PC-3 (cell line): ENCODE measurements at regions of chr7 and their contacts with region 1.

Region 1: GRCh38 chr7:38748056-38748611 is 117.0 kb upstream of the AMPH start:
- DNase-seq: peak; percentile 54
- ATAC-seq: peak; percentile 73
- H3K4me3 ChIP-seq: no peak overlapping the region
- H3K27ac ChIP-seq: no peak overlapping the region
- H3K4me1 ChIP-seq: peaks cover 12% of the 10 kb centered on the region
- H3K27me3 ChIP-seq: no peaks in the 10 kb centered on the region
- CTCF ChIP-seq: peak; percentile 77

Region 2: GRCh38 chr7:38398725-38399321 is 349.3 kb before region 1 on chr7:
- CTCF ChIA-PET with region 1: no interaction called
- POLR2A ChIA-PET with region 1: no interaction called
- intact Hi-C with region 1: loop called (anchors 1 kb)
- DNase-seq: peak; percentile 52
- ATAC-seq: peak; percentile 68
- H3K4me3 ChIP-seq: no peak overlapping the region
- H3K27ac ChIP-seq: no peak overlapping the region
- H3K4me1 ChIP-seq: no peaks in the 10 kb centered on the region
- H3K27me3 ChIP-seq: peaks cover 4% of the 10 kb centered on the region; the same call in 1 of the 2 replicates
- CTCF ChIP-seq: peak; percentile 79

Region 3: DNA sequence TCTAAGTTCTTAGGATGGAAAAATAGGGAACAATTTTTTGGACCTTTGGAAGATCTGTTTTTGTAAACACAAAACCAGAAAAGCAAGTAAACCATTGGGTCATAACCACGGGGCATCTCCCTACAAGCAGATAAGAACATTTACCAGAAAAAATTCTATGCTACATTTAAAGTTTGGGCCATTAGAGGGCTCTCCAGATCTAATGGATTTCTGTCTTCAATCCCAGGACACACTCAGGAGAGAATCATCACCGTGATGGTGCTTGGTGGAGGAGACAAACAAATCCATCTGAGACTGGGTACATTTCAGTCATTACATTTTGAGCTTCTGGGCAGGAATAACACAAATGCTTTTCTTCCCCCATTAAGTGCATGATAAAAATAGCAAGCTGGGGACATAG is 296.3 kb before region 1 on chr7:
- CTCF ChIA-PET with region 1: no interaction called
- POLR2A ChIA-PET with region 1: no interaction called
- intact Hi-C with region 1: loop called (anchors 1 kb)
- DNase-seq: peak; percentile 62
- ATAC-seq: peak; percentile 48
- H3K4me3 ChIP-seq: no peak overlapping the region
- H3K27ac ChIP-seq: no peak overlapping the region
- H3K4me1 ChIP-seq: no peaks in the 10 kb centered on the region
- H3K27me3 ChIP-seq: peaks cover 36% of the 10 kb centered on the region
- CTCF ChIP-seq: peak; percentile 57

Region 4: GRCh38 chr7:38704751-38705150 is 43.4 kb before region 1 on chr7:
- CTCF ChIA-PET with region 1: no interaction called
- POLR2A ChIA-PET with region 1: no interaction called
- intact Hi-C with region 1: loop called (anchors 5 kb)
- DNase-seq: peak; percentile 16
- ATAC-seq: peak; percentile 17; the same call in 1 of the 2 replicates
- H3K4me3 ChIP-seq: no peak overlapping the region
- H3K27ac ChIP-seq: peak overlapping the region; percentile 86
- H3K4me1 ChIP-seq: peaks cover 30% of the 10 kb centered on the region
- H3K27me3 ChIP-seq: no peaks in the 10 kb centered on the region
- CTCF ChIP-seq: no peak

Region 5: DNA sequence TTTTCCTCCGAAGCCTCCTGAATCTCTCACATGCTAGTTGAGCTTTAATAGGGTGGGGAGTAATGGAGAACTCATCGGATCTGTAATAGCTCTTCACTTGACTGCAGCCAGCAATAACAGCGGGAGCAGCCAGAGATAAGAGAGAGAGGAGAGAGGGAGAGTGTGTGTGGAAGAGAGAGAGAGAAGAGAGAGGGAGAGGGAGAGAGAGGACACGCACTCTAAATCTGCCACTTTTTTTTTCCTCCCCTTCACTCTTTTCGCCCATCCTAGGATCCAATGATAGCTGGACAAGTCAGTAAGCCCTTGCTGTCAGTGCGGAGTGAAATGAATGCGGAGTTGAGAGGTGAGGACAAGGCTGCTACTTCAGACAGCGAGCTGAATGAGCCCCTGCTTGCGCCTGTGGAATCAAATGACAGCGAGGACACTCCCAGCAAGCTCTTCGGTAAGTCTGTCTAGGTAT is 337.5 kb after region 1 on chr7:
- CTCF ChIA-PET with region 1: no interaction called
- POLR2A ChIA-PET with region 1: interaction called, 36 read pairs
- intact Hi-C with region 1: no loop called
- DNase-seq: no peak
- ATAC-seq: no peak
- H3K4me3 ChIP-seq: no peak overlapping the region
- H3K27ac ChIP-seq: no peak overlapping the region
- H3K4me1 ChIP-seq: no peaks in the 10 kb centered on the region
- H3K27me3 ChIP-seq: peaks cover 85% of the 10 kb centered on the region
- CTCF ChIP-seq: no peak